GM18951 (cell line): ENCODE measurements at regions of chr10 and their contacts with region 1.

Region 1: DNA sequence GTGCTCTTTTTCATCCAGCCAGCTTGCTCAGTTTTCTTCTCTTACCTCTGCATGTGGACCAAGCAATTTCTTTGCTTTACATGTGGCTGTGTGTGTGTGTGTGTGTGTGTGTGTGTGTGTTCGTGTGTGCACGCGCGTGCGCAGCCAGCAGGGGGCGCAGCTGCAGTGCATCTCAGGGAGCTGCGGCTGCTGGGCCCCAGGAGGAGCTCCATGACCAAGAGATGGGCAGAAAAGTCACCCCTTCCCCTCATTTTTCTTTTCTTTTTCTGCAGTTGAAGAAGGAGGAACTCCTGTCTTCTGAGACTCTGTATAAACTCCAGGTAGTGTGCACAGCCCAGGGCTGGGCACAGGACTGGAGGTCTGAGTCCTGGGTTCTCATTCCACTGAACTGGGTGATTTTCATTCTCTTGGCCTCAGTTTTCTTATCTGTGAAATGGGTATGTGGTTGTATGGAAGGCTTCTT is 41.8 kb downstream of the BLNK start:
- POLR2A ChIP-seq: peak; percentile 27

Region 2: GRCh38 chr10:95818668-95819067 is 410.9 kb before region 1 on chr10:
- in situ Hi-C with region 1: no loop called
- POLR2A ChIP-seq: no peak

Region 3: DNA sequence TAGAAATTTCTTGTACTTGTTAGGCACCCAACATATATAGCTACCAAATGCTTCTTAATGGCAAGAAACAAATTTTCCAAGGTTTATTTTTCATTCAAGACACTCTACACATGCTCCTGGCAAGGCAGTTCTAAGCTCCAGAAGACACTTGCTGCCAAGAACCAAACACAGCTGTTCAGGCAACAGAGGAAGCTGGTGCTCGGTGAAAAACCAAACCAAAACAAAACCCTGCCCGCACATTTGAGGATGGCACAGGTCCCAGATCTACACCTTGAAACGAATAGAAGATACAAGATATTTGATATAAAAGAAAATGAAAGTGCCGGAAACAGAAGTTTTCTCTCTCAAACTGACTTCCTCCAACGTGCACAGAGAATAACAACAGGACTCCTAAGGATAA is 69.8 kb after region 1 on chr10:
- in situ Hi-C with region 1: loop called (anchors 5 kb)
- POLR2A ChIP-seq: no peak

Region 4: DNA sequence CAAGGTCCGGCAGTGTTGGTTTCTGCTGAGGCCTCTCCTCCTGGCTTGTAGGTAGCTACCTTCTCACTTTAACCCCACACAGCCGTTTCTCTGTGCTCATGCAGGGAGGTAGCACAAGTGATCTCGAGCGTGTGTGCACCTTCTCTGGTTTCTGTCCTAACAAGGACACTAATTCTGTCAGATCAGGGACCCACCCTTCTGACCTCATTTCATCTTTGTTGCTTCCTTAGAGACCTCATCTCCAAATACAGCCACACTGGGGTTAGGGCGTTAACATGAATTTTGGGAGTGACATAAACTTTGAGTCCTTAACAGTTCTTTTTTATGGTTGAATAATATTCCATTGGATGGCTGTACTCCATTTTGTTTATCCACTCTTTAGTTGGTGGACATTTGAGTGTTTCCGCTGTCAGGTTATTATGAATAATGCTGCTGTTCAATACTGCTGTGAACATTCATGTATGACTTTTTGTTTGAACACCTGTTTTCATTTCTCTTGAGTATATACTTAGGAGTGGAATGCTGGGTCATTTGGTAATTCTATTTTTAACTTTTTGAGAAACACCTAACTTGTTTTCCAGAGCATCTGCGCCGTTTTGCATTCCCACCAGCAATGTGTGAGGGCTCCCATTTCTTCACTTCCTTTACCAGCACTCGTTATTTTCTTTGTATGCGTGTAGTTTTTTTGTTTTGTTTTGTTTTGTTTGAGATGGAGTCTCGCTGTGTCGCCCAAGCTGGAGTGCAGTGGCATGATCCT is 660.0 kb after region 1 on chr10:
- in situ Hi-C with region 1: loop called (anchors 10 kb)
- POLR2A ChIP-seq: no peak

Region 5: DNA sequence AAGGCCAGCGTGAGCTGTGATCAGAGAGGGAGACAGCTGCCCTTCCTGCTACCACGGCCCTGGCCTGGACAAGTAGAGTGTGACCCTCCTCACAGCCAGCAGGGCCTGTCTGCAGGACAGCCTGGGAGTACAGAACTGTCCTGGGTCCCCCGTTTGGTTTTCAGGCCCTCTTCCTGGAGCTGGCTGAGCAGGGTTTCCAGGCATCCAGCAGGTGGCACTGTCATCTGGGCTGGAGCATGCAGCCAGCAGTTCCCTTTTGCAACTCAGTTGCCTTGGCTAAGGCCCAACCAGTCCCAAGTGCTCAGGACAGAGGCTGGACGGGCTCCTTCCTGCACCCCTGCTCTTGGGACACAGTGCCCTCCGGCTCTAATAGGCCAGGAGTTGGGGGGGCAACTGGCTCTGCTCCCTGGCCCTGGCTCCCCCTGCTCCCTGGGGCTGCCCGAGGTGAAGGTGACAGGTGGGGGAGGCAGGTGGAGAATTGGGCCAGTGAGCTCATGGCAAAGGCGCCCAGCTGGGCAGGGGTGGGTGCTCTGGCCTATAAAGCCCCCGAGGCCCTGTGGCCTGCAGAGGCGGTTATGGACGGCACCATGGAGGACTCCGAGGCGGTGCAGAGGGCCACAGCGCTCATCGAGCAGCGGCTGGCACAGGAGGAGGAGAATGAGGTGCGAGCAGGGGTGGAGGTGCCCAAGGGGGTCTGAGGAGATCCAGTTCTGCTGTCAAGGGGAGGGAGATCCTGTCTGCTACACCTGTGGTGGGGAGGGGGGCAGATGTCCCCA is 1342.8 kb after region 1 on chr10 and contains the start of gene ANKRD2:
- in situ Hi-C with region 1: no loop called
- POLR2A ChIP-seq: no peak